Left cardiac atrium (tissue), 4 donors: ENCODE measurements at regions of chr9 and their contacts with region 1.

Region 1: GRCh38 chr9:117334101-117334500 is 80.8 kb downstream of the ASTN2 start:
- DNase-seq: no peak
- ATAC-seq: no peak

Region 2: DNA sequence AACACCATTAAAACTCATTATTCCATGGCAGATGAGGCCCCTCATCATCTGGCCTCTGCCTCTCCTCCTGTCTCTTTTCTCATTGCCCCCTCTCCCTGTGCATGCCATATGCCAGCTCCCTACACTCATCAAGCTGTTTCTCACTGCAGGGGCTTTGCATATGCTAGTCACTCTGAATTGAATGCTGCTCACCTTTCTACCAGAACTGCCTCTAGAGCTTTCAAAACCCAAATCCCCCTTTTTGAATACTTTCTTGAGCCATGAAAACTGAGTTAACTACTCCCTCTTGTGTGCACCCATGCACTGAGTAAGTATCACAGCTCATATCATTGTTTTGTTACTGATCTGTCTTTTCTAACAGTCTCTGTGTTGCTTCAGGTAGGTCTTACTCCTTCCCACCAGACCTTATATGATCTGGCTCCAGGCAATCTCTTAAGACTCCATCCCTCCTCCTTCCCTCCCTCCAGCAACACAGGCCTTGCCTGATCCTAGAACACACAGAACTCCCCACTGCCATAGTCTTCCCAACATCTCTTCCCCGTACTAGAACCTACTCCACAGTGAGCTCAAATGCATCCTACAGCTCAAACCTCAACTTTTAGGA is 20.2 kb after region 1 on chr9:
- intact Hi-C with region 1: loop called in 1 of 2 experiments (anchors 2 kb)
- DNase-seq: no peak
- ATAC-seq: no peak